Upper lobe of right lung (tissue), 1 donor: ENCODE measurements at regions of chr2 and their contacts with region 1.

Region 1: GRCh38 chr2:96509114-96509846 is 4.1 kb upstream of the NEURL3 start:
- DNase-seq: peak; percentile 93
- ATAC-seq: peak; percentile 95
- H3K4me3 ChIP-seq: no peak overlapping the region
- H3K27ac ChIP-seq: no peak overlapping the region
- H3K4me1 ChIP-seq: peaks cover 18% of the 10 kb centered on the region
- H3K27me3 ChIP-seq: no peaks in the 10 kb centered on the region
- CTCF ChIP-seq: peak; percentile 98

Region 2: DNA sequence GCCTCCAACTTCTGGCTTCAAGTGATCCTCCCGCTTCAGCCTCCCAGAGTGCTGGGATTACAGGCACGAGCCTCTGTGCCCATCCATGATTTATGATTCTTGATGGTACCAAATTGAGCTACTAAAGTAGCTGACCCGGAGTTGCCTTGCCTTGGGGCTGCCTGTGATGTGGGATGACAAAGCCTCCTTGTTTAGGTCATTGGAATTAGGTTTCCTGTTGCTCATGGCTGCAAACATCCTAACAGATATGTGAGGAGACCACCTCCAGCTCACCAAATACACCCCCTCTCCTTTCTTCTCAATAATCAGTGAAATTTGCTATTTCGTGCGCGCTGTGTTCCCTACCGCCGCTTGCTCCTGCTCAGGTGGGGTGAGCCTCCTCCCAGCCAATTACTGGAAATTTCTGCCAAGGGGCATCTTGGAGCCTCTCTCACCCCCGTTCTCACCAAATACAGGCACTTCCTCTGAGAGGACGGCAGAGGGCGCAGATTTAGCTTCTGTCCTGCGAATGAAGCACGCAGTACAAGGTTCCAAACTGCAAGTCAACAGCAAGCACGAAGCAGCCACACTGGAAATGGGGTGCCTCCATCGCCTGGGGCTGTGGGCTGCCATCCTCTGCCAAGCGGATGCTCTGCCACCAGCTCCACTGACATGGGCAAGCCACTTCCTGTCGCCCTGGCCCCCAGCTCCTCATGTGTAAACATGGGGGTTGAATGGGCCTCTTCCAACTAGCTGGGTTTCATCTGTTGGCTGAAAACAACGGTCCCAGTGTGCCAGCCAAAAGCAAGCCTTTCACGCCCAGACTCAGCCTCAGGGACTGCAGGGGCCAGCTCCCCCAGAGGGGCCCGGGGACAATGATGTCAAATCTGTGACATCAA is 102.0 kb before region 1 on chr2:
- intact Hi-C with region 1: loop called (anchors 5 kb)
- DNase-seq: peak; percentile 70
- ATAC-seq: peak; percentile 88
- H3K4me3 ChIP-seq: no peak overlapping the region
- H3K27ac ChIP-seq: no peak overlapping the region
- H3K4me1 ChIP-seq: peaks cover 16% of the 10 kb centered on the region
- H3K27me3 ChIP-seq: no peaks in the 10 kb centered on the region
- CTCF ChIP-seq: peak; percentile 79